Dorsolateral prefrontal cortex (tissue), 120 donors: ENCODE measurements at regions of chr18 and their contacts with region 1.

Region 1: DNA sequence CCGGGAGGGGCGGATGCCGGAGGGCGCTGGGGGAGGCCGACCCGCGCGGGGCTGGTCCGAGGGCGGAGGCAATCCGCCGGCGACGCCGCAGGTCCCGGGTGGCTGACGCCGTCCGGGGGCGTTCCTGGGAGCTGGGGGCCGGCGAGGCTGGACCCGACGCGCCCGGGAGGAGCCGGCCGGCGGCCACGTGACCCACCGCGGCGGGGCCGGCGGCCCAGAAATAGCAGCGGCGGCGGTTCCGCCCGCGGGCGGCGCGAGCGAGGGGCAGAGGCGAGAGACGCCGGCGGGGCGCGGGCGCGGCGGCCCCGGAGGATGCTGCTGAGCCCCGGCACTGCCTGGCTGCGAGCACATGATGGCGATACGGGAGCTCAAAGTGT is at the start of gene RAB31:
- DNase-seq: peak; percentile 30 to 86 (median 56)
- H3K4me3 ChIP-seq: peak within 1 kb of the TSS; percentile 62 to 86 (median 78)
- H3K27ac ChIP-seq: peak within 1 kb of the TSS; percentile 47 to 97 (median 89)
- H3K27me3 ChIP-seq: no peaks in the 10 kb centered on the region
- CTCF ChIP-seq: peak in 7 of 56 donors; percentile 2 to 44 (median 12)
- total RNA-seq, gene RAB31: 48.3 to 273 (median 87.7) TPM

Region 2: DNA sequence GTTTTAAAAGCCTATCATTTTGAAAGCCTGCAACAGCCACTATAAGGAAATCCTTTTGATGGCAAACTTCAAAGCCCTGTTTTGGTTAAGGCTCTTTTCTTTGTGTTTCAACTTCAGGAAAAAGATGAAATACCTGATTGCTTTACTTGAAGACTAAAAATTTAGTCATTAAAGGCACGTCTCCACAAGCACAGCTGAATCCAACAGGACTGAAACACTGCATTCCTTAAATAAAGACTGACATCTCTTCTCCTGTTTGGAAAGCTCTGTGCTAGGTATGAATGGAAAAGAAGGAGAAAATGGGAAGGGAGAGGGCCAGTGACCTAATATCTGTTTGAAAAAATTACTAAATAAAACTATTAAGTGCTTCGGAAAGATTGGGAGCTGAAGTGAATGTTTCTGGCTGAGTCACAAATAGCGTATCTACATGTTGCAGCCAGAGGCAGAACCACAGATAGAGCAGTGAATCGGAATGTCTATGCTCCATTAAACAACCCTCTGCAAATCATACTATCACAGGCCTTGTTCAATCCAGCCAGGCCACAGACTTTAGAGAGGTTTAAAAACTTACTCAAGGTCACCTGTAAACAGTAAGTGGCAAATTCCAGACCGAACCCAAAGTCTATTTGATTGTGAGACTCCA is 253.9 kb before region 1 on chr18:
- intact Hi-C with region 1: no loop called
- DNase-seq: no peak
- H3K4me3 ChIP-seq: peak overlapping the region in 1 of 59 donors; percentile 31
- H3K27ac ChIP-seq: peak overlapping the region in 41 of 59 donors; percentile 2 to 80 (median 55)
- H3K27me3 ChIP-seq: no peaks in the 10 kb centered on the region
- CTCF ChIP-seq: no peak

Region 3: GRCh38 chr18:9771261-9771976 is 63.4 kb after region 1 on chr18:
- intact Hi-C with region 1: loop called in 1 of 2 experiments (anchors 2 kb)
- DNase-seq: peak; percentile 37 to 89 (median 83)
- H3K4me3 ChIP-seq: peak overlapping the region in 28 of 59 donors; percentile 1 to 49 (median 15)
- H3K27ac ChIP-seq: peak overlapping the region in 38 of 59 donors; percentile 0 to 85 (median 50)
- H3K27me3 ChIP-seq: no peaks in the 10 kb centered on the region
- CTCF ChIP-seq: peak; percentile 64 to 99 (median 96)

Region 4: DNA sequence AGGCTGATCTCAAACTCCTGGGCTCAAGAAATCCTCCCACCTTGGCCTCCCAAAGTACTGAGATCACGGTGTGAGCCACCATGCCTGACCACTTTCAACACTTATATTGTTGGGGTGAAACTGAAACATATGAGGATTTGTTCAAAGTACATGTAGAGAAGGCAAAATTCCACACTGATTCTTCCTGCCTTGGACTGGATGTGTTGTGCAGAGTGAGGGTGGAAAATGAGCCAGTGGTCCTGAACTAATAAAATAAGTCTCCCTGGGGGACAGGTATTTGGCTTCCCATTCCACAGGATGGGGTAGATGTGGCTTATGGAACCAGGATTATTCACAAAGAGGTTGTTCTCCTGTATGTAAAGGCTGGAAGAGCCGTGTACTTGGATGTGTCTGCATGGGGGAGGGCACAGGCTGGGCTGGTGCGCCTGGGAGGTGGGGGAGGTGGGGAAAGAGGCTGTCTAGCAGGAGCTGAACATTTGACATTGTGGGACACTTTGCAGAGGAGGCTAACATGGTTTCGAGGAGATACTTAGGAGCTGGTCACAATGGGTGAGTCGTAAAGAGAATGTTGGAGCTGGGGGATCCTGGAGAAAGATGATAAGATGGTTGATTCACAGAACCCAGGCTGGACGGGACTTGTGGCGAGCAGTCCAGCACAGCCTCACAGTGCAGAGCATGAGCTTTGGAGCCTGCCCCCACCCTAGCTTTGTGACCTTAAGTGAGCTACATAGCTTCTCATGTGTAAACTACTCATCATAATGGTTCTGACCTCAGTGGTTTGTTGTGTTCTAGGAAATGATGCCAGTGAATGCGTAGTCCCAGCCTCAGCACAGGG is 177.3 kb after region 1 on chr18 and contains the start of gene TXNDC2:
- intact Hi-C with region 1: no loop called
- DNase-seq: no peak
- H3K4me3 ChIP-seq: no peak within 1 kb of the TSS
- H3K27ac ChIP-seq: no peak within 1 kb of the TSS
- H3K27me3 ChIP-seq: no peaks in the 10 kb centered on the region
- CTCF ChIP-seq: no peak
- total RNA-seq, gene TXNDC2: 0.12 to 2.2 (median 0.46) TPM in 78 of 120 experiments, not detected in the others

Region 5: GRCh38 chr18:9951022-9951859 is 243.2 kb after region 1 on chr18:
- intact Hi-C with region 1: loop called (anchors 10 kb)
- DNase-seq: peak in 2 of 10 donors; percentile 62 to 66
- H3K4me3 ChIP-seq: no peak overlapping the region
- H3K27ac ChIP-seq: peak overlapping the region in 24 of 59 donors; percentile 0 to 65 (median 20)
- H3K27me3 ChIP-seq: no peaks in the 10 kb centered on the region
- CTCF ChIP-seq: peak; percentile 28 to 86 (median 68)

Region 6: GRCh38 chr18:10410472-10411308 is 702.6 kb after region 1 on chr18:
- intact Hi-C with region 1: no loop called
- DNase-seq: no peak
- H3K4me3 ChIP-seq: no peak overlapping the region
- H3K27ac ChIP-seq: peak overlapping the region in 6 of 59 donors; percentile 23 to 50 (median 40)
- H3K27me3 ChIP-seq: no peaks in the 10 kb centered on the region
- CTCF ChIP-seq: no peak

Region 7: DNA sequence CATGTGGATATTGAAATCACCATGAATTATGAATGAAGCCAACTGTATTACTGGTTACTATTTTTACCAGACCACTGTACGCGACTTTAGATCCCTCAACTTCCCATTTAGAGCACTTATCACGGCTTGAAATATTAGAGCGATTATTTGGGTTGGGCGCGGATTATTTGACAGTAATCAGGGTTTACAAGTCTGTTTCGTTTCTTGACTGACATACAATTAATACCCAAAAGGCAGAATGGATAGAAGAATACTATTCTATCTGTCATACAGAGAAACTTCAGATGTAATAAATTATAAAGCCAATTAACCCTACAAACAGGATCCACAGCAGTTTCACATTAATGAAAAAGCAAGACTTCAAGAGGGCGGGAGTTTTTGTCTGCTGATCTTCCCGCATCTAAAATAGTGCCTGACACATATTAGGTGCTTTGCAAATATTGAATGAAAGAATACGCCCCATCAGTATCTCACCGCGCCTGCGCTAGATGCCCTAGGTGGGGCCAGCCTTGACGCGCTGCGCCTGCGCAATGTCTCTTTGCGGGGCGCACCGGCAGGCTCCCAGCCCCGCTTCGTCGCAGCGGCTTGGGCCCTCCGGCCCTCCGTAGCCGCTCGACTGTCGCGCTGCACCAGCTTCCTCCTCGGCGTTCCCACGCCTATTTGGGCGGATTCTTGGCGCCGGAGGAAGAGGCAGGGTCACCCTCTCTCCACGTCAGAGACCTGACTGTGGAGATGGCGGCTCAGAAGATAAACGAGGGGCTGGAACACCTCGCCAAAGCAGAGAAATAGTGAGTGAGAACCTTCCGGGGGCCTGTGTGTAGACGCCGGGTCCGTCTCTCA is 817.5 kb after region 1 on chr18 and contains the start of gene NAPG:
- intact Hi-C with region 1: loop called in 1 of 2 experiments (anchors 10 kb)
- DNase-seq: peak; percentile 76 to 95 (median 86)
- H3K4me3 ChIP-seq: peak within 1 kb of the TSS; percentile 56 to 99 (median 94)
- H3K27ac ChIP-seq: peak within 1 kb of the TSS; percentile 65 to 97 (median 91)
- H3K27me3 ChIP-seq: no peaks in the 10 kb centered on the region
- CTCF ChIP-seq: peak in 29 of 56 donors; percentile 10 to 58 (median 33)
- total RNA-seq, gene NAPG: 52.2 to 139 (median 98.2) TPM